HEK293 (cell line): ENCODE measurements at regions of chr17 and their contacts with region 1.

Region 1: GRCh38 chr17:49861150-49861892 is 13.5 kb upstream of the TAC4 start:
- H3K4me3 ChIP-seq: no peak overlapping the region
- H3K27ac ChIP-seq: no peak overlapping the region
- H3K4me1 ChIP-seq: no peaks in the 10 kb centered on the region
- CTCF ChIP-seq: peak; percentile 89

Region 2: GRCh38 chr17:49815761-49816281 is 45.5 kb before region 1 on chr17:
- CTCF ChIA-PET with region 1: no interaction called
- POLR2A ChIA-PET with region 1: no interaction called
- H3K4me3 ChIP-seq: no peak overlapping the region
- H3K27ac ChIP-seq: no peak overlapping the region
- H3K4me1 ChIP-seq: no peaks in the 10 kb centered on the region
- CTCF ChIP-seq: no peak

Region 3: GRCh38 chr17:49873466-49873865 is 12.1 kb after region 1 on chr17:
- CTCF ChIA-PET with region 1: interaction called, 19 read pairs
- POLR2A ChIA-PET with region 1: no interaction called
- H3K4me3 ChIP-seq: no peak overlapping the region
- H3K27ac ChIP-seq: no peak overlapping the region
- H3K4me1 ChIP-seq: no peaks in the 10 kb centered on the region
- CTCF ChIP-seq: no peak

Region 4: DNA sequence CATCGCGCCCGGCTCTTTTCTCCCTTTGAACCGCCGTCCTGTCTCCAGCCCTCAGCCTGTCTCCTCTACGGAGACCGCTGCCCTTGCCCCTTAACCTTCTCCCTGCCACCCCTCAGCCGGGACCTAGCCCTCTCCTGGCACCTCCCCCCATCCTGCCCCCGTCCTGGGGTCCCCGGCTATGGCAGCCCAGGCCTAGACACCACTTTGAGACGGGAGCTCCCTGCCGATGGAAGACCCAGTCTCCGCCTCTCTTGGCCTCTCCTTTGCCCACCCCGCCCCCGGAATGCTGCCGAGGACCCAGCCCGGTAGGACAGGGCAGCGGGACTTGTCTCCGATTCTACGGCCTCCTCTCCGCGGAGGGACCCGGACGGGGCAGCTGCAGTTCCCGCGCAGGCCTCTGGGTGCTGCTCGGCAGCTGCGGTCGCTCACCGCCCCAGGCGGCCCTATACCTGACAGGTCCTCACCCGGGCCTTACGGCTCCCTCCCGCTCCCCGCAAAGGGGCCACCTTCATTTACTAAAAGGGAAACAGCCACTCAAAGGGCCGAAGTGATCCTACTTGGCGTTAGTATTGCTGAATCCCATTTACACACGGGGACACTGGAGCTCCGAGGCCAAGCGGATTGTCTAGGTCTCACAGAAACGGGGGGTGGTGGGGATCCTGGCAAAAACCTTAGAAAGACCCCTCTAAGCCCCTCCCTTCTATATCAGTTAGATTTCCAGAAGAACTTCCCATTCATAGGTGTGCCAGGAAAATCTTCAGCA is 19.2 kb after region 1 on chr17:
- CTCF ChIA-PET with region 1: interaction called, 19 read pairs
- POLR2A ChIA-PET with region 1: no interaction called
- H3K4me3 ChIP-seq: peak overlapping the region; percentile 21
- H3K27ac ChIP-seq: no peak overlapping the region
- H3K4me1 ChIP-seq: peaks cover 5% of the 10 kb centered on the region; the same call in 1 of the 2 replicates
- CTCF ChIP-seq: peak; percentile 76